MCF 10A (cell line): ENCODE measurements at regions of chr5 and their contacts with region 1.

Region 1: DNA sequence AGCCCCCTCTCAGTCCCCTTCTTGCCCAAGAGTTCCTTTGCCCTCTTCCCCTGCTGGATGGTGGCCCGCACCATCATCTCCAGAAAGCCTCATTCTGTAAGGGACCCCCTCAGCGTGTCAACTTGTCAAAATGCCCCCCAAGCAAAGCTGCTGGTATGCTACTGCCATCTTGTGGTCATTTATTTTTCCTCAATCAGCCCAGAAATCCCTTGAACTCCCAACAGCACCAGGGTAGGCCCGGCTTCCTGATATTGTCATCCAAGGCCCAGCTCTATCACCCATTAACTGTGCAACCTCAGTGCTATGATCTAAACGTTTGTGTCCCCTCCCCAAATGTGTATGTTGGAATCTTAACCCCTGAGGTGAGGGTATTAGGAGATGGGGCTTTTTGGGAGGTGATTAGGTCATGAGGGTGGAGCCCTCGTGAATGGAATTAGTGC is 53.2 kb upstream of the FBXW11 start:
- DNase-seq: peak; percentile 30
- H3K4me3 Mint-ChIP-seq: no peak overlapping the region
- H3K27ac Mint-ChIP-seq: no peak overlapping the region
- H3K4me1 Mint-ChIP-seq: no peaks in the 10 kb centered on the region
- H3K27me3 Mint-ChIP-seq: no peaks in the 10 kb centered on the region
- CTCF ChIP-seq: peak; percentile 64

Region 2: DNA sequence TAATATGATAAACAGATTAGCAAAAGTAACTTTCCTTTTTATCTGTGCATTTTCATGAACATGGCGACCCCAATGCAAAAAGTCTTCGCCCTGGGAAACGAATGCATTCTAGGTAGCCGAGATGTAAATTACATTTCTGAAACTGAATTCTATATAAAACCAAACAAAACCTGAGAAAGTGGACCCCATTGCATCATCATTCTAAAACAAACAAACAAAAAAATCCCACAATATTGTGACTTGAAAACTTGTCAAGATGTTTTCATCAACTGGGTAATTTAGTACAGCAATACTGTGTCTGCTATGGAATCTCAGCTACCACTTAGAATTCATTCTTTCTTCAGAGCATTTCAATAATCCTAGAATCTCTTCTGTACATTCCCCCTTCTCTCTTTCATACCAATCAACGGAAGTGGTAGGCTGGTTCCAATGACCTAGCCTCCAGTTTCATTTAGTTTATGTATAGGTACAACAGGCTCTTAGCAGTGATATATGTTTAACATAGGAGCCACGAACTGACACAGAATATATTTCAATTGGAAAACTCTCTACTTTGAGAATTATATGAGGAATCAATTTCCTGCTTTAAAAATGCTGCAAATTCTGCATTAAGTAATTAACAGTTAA is 138.8 kb before region 1 on chr5:
- CTCF ChIA-PET with region 1: interaction called, 21 read pairs
- POLR2A ChIA-PET with region 1: no interaction called
- intact Hi-C with region 1: no loop called
- DNase-seq: no peak
- H3K4me3 Mint-ChIP-seq: no peak overlapping the region
- H3K27ac Mint-ChIP-seq: no peak overlapping the region
- H3K4me1 Mint-ChIP-seq: peaks cover 14% of the 10 kb centered on the region
- H3K27me3 Mint-ChIP-seq: no peaks in the 10 kb centered on the region
- CTCF ChIP-seq: no peak

Region 3: DNA sequence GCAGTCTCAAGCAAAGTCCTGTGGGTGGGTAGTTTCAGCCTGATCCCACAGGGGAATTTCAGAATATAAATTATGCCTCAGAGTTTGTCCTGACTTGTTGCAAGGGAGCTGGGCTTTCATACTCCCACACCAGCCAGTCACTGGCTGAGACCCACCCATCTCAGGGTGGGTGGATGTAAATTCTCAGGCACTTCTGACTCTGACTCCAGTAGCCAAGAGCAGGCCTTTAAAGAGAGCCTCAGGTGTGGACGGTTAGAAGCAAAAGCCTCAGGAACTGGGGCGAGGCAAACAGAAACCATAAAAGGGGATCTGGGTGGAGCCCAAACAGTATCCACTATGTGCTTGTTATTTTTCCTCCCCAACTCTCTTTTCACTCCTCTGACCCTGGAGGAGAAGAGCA is 24.6 kb before region 1 on chr5:
- CTCF ChIA-PET with region 1: interaction called, 16 read pairs
- POLR2A ChIA-PET with region 1: no interaction called
- intact Hi-C with region 1: no loop called
- DNase-seq: no peak
- H3K4me3 Mint-ChIP-seq: no peak overlapping the region
- H3K27ac Mint-ChIP-seq: no peak overlapping the region
- H3K4me1 Mint-ChIP-seq: peaks cover 2% of the 10 kb centered on the region
- H3K27me3 Mint-ChIP-seq: no peaks in the 10 kb centered on the region
- CTCF ChIP-seq: no peak

Region 4: DNA sequence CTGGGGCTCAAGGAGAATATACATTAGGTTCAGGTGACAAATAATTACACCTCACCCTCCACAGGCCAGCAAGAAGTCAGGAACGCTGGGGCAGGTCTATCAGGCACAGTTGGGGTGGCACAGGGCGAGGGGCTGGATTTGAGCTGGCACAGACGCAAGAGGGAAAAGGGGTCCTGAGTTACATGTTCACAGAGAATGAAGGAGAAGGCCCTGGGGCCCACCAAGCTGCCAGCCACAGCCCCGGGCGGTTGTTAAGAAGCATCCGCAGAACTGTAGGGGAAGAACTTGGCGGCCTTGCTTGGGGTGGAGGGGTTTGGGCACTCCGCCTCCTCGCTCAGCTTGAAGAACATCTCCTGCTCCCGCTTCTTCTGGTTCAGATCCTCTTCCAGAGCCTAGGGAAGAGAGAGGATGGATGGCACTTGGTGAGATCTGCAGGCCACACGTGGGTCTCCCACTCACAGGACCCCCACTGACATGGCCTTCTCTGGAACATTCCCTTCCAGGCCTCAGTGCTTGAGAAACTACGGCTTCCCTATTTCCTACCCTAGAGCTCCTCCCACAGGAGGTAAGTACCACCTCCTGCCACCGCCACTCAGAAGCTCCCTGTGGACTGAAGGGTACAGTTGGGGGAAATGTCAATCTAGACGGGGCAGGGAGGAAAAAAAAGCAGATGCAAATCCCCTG is 14.9 kb before region 1 on chr5:
- CTCF ChIA-PET with region 1: interaction called, 15 read pairs
- POLR2A ChIA-PET with region 1: no interaction called
- intact Hi-C with region 1: no loop called
- DNase-seq: no peak
- H3K4me3 Mint-ChIP-seq: no peak overlapping the region
- H3K27ac Mint-ChIP-seq: peak overlapping the region; percentile 52
- H3K4me1 Mint-ChIP-seq: peaks cover 6% of the 10 kb centered on the region
- H3K27me3 Mint-ChIP-seq: no peaks in the 10 kb centered on the region
- CTCF ChIP-seq: no peak

Region 5: DNA sequence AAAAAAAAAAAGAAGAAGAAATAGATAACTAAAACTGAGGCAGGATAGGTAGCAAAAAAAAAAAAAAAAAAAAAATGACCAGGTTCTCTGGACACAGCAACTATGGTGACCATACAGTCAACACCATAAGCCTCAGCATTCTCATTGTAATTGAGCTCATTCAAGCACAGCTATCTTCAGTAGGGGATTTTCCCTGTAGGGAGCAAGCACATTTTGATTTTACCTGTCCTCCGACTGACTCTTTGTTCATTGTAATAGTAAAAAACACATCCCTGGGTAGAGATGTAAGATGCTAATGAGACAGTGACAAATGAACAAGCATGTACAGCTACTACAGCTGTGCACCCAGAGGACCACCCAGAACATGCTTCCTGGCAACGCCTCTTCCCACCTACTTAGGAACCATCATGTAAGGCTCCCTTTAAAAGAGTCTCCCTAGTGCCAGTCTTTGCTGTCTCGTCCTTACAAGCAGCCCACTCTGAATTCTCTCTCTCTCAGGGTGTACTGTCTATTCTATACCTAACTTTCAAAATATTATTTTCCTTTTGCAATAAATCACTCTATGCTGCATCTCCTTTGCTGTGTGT is 11.7 kb after region 1 on chr5:
- CTCF ChIA-PET with region 1: interaction called, 46 read pairs
- POLR2A ChIA-PET with region 1: interaction called, 3 read pairs
- intact Hi-C with region 1: no loop called
- DNase-seq: no peak
- H3K4me3 Mint-ChIP-seq: no peak overlapping the region
- H3K27ac Mint-ChIP-seq: no peak overlapping the region
- H3K4me1 Mint-ChIP-seq: no peaks in the 10 kb centered on the region
- H3K27me3 Mint-ChIP-seq: no peaks in the 10 kb centered on the region
- CTCF ChIP-seq: no peak

Region 6: GRCh38 chr5:172097356-172097755 is 37.7 kb after region 1 on chr5:
- CTCF ChIA-PET with region 1: interaction called, 17 read pairs
- POLR2A ChIA-PET with region 1: no interaction called
- intact Hi-C with region 1: no loop called
- DNase-seq: no peak
- H3K4me3 Mint-ChIP-seq: no peak overlapping the region
- H3K27ac Mint-ChIP-seq: no peak overlapping the region
- H3K4me1 Mint-ChIP-seq: peaks cover 11% of the 10 kb centered on the region
- H3K27me3 Mint-ChIP-seq: no peaks in the 10 kb centered on the region
- CTCF ChIP-seq: no peak

Region 7: GRCh38 chr5:172283020-172283861 is 223.6 kb after region 1 on chr5 and contains the start of gene UBTD2:
- CTCF ChIA-PET with region 1: interaction called, 10 read pairs
- POLR2A ChIA-PET with region 1: no interaction called
- intact Hi-C with region 1: no loop called
- DNase-seq: peak; percentile 88
- H3K4me3 Mint-ChIP-seq: peak within 1 kb of the TSS; percentile 95
- H3K27ac Mint-ChIP-seq: peak within 1 kb of the TSS; percentile 97
- H3K4me1 Mint-ChIP-seq: peaks cover 29% of the 10 kb centered on the region
- H3K27me3 Mint-ChIP-seq: no peaks in the 10 kb centered on the region
- CTCF ChIP-seq: peak; percentile 76
- total RNA-seq, gene UBTD2: 23.3 and 24.1 TPM in 2 replicates